ENCODE measurements at regions of chr10 and their contacts with region 1.

Region 1: DNA sequence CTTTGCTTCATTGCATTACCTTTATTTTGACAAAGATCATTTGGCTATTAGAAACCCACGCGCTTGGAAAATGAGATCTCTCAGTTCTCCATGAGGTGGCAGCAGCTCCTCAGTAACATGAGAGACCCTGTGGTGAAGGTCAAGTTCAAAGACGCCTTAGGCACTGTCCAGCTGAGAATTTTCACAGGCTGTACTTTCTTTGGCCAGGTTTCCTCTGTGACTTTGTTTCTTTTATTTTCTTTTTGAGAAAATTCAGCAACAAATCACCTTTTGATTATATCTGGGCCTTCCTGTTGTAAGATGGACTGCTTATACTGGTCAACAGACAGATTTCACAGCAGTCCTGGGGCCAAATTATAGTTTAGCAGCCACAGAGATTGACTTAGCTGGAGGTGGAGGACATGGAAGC is 54.5 kb downstream of the RAB18 start:
- H3K4me3 ChIP-seq: no peak overlapping the region
- H3K27ac ChIP-seq: no peak overlapping the region
- H3K4me1 ChIP-seq: no peaks in the 10 kb centered on the region
- CTCF ChIP-seq: peak; percentile 57; the same call in 1 of the 2 replicates

Region 2: DNA sequence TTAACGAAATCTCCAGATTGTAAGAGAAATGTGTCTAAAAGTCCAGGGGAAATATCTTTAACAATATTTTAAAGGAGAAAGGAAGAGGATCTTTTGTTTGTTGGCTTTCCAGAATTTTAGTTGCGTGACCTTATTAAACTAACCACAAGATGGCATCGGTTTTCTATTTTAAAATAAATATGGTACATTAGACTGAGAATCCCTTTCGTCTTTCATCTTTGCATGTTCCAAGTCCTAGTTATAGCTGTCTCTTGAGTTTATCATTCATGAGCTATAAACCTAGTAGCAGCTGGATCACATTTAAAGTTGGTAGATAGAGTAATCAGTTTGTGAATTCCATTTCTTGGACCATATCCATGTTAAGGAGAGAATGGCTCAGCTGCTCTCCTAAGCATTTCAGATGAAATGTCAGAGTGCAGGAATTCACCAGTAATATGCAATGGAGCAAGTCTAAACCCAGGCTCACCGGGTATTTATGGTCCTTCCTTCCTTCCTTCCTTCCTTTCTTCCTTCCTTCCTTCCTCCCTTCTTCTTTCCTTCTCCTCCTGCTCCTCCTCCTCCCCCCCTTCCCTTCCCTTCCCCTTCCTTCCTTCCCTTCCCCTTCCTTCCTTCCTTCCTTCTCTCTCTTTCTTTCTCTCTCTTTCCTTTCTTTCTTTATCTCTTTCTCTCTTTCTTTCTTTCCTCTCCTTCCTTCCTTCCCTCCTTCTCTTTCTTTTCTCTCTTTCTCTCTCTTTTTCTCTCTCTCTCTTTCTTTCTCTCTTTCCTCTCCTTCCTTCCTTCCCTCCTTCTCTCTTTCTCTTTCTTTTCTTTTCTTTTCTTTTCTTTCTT is 112.3 kb before region 1 on chr10:
- CTCF ChIA-PET with region 1: interaction called, 10 read pairs
- POLR2A ChIA-PET with region 1: no interaction called
- H3K4me3 ChIP-seq: no peak overlapping the region
- H3K27ac ChIP-seq: no peak overlapping the region
- H3K4me1 ChIP-seq: no peaks in the 10 kb centered on the region
- CTCF ChIP-seq: no peak

Region 3: GRCh38 chr10:27658788-27659187 is 100.2 kb after region 1 on chr10:
- CTCF ChIA-PET with region 1: interaction called, 13 read pairs
- POLR2A ChIA-PET with region 1: no interaction called
- H3K4me3 ChIP-seq: no peak overlapping the region
- H3K27ac ChIP-seq: no peak overlapping the region
- H3K4me1 ChIP-seq: peaks cover 30% of the 10 kb centered on the region
- CTCF ChIP-seq: no peak

Measured in HEK293 (cell line).